ENCODE measurements at regions of chr1 and their contacts with region 1.

Region 1: GRCh38 chr1:223081181-223081994 is 61.7 kb downstream of the TLR5 start:
- DNase-seq: peak; percentile 81
- ATAC-seq: peak; percentile 95
- H3K4me3 Mint-ChIP-seq: peak overlapping the region; percentile 44
- H3K27ac Mint-ChIP-seq: no peak overlapping the region
- H3K4me1 Mint-ChIP-seq: no peaks in the 10 kb centered on the region
- H3K27me3 Mint-ChIP-seq: no peaks in the 10 kb centered on the region

Region 2: DNA sequence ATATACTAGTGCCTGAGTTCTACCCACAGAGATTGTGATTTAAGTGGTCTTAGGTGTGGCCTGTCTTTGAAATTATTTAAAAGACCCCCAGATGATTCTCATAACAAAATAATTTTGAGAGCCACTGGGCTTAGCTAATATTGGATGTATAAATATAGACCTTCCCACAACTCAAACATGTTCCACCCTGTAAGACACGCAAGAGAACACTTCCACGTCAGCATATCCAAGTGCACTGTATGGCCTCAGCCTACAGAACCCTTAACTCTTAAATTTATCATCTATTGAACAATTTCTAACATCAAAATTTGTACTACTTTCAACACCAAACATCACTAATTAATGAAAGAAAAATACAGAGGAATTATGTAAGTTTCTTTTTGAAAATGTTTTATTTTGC is 341.9 kb before region 1 on chr1:
- CTCF ChIA-PET with region 1: interaction called, 14 read pairs
- POLR2A ChIA-PET with region 1: no interaction called
- DNase-seq: no peak
- ATAC-seq: no peak
- H3K4me3 Mint-ChIP-seq: no peak overlapping the region
- H3K27ac Mint-ChIP-seq: no peak overlapping the region
- H3K4me1 Mint-ChIP-seq: no peaks in the 10 kb centered on the region
- H3K27me3 Mint-ChIP-seq: no peaks in the 10 kb centered on the region

Region 3: GRCh38 chr1:222897527-222898190 is 183.7 kb before region 1 on chr1:
- CTCF ChIA-PET with region 1: no interaction called
- POLR2A ChIA-PET with region 1: no interaction called
- DNase-seq: no peak
- ATAC-seq: peak; percentile 52
- H3K4me3 Mint-ChIP-seq: peak overlapping the region; percentile 68
- H3K27ac Mint-ChIP-seq: peak overlapping the region; percentile 68
- H3K4me1 Mint-ChIP-seq: peaks cover 14% of the 10 kb centered on the region
- H3K27me3 Mint-ChIP-seq: no peaks in the 10 kb centered on the region

Region 4: DNA sequence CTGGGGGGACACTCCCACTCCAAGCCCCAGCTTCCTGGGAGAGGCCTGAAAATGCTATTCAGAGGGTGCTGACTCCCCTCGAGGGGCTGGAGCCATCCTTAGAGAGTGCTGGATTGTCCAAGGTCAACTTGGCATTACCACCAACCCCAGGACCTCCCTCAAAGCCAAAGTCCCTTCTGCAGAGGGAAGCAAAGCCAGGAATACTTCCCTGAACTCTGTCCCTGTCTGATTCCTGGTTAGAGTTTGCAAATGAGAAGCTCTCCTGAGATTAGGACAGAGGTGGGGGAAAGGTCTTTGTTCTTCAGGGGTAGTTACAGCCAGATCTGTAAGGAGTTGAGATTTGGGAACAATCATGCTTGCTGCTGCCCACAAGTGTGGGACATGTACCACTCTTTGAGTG is 16.3 kb after region 1 on chr1:
- CTCF ChIA-PET with region 1: no interaction called
- POLR2A ChIA-PET with region 1: no interaction called
- DNase-seq: no peak
- ATAC-seq: no peak
- H3K4me3 Mint-ChIP-seq: no peak overlapping the region
- H3K27ac Mint-ChIP-seq: no peak overlapping the region
- H3K4me1 Mint-ChIP-seq: no peaks in the 10 kb centered on the region
- H3K27me3 Mint-ChIP-seq: peaks cover 6% of the 10 kb centered on the region

Measured in activated CD8-positive, alpha-beta T cell treated with anti-CD3 and anti-CD28 coated beads, Interleukin-2, amount 10 ng/mL, durations not matched to agents 7 days and 5 days (primary cell).